AG04450 (cell line): ENCODE measurements at regions of chr12 and their contacts with region 1.

Region 1: DNA sequence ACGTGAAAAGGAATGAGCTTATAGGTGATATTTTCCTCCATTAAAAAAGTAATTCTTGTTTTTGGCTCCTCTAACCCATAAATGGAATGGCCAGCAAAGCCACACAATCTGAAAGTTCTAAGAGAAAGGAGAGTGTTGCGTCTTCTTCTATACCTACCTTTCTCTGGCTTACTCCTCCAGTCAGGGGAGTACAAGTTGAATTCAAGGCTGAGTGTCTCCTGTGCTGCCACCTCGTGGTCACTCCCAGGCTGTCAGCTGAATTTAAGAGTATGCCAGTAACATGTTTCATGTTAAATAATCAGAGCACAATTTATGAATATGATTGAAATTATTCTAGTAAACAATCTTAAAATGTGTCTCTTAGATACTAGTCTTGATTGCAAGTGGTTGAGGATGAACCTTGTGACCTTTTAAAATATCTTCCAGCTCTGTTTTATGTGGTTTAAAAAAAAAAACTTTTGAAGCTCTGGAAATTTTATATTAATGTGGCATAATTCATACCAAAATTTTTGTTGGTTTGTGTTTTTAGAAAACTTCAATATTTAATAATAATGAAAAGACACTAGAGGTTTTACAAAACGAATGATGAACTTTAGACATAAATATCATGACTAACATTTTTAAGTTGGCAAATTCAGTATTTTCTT is 31.7 kb downstream of the PTHLH start:
- DNase-seq: peak; percentile 47
- H3K4me3 ChIP-seq: no peak overlapping the region
- H3K27ac ChIP-seq: no peak overlapping the region
- H3K27me3 ChIP-seq: no peaks in the 10 kb centered on the region
- CTCF ChIP-seq: peak; percentile 93

Region 2: DNA sequence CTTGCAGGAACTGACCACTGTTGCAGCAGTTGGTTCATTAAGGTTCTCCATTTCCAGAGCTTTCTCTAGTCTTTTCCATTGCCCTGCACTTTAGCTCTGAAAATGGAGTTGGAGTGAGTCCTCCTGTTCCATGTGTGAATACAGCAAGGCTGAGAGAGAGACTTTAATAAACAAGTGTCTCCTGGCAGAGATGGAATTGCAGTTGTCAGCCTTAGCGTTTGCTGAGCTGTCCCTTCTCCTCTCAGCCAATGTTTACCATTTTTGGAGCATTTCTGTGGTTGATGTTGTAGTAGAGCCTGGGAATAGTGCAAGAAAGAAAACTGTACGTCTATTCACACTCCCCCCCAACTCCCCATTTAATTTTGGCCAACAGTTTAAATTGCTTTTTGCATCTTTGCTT is 153.3 kb before region 1 on chr12:
- CTCF ChIA-PET with region 1: interaction called, 16 read pairs
- POLR2A ChIA-PET with region 1: no interaction called
- DNase-seq: peak; percentile 52
- H3K4me3 ChIP-seq: no peak overlapping the region
- H3K27ac ChIP-seq: peak overlapping the region; percentile 76
- H3K27me3 ChIP-seq: no peaks in the 10 kb centered on the region
- CTCF ChIP-seq: no peak

Region 3: GRCh38 chr12:27924350-27925135 is 16.3 kb before region 1 on chr12:
- CTCF ChIA-PET with region 1: interaction called, 12 read pairs
- POLR2A ChIA-PET with region 1: no interaction called
- DNase-seq: no peak
- H3K4me3 ChIP-seq: no peak overlapping the region
- H3K27ac ChIP-seq: no peak overlapping the region
- H3K27me3 ChIP-seq: no peaks in the 10 kb centered on the region
- CTCF ChIP-seq: no peak

Region 4: GRCh38 chr12:27952510-27952909 is 11.6 kb after region 1 on chr12:
- CTCF ChIA-PET with region 1: interaction called, 31 read pairs
- POLR2A ChIA-PET with region 1: no interaction called
- DNase-seq: no peak
- H3K4me3 ChIP-seq: no peak overlapping the region
- H3K27ac ChIP-seq: no peak overlapping the region
- H3K27me3 ChIP-seq: no peaks in the 10 kb centered on the region
- CTCF ChIP-seq: no peak

Region 5: DNA sequence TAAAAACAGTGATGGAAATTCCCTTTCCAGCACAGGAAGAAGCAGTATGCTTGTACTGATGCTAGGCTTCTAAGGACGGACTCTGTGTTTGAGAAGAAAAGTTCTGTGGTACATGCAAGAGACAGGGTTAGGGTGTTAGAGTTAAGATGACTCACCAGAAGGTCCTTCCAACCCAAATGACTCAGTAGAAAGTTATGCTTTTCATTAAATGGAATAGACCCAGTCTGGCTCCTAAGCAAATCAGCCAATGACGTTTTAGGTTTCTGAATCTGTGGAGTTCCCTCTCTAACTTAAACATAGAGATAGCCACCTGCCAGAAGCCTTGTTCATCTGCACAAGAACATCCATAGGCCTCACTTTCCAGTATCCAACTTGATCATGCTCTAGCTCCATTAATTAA is 26.0 kb after region 1 on chr12:
- CTCF ChIA-PET with region 1: interaction called, 17 read pairs
- POLR2A ChIA-PET with region 1: no interaction called
- DNase-seq: peak; percentile 92
- H3K4me3 ChIP-seq: no peak overlapping the region
- H3K27ac ChIP-seq: no peak overlapping the region
- H3K27me3 ChIP-seq: no peaks in the 10 kb centered on the region
- CTCF ChIP-seq: no peak